ENCODE measurements at regions of chr1 and their contacts with region 1.

Region 1: DNA sequence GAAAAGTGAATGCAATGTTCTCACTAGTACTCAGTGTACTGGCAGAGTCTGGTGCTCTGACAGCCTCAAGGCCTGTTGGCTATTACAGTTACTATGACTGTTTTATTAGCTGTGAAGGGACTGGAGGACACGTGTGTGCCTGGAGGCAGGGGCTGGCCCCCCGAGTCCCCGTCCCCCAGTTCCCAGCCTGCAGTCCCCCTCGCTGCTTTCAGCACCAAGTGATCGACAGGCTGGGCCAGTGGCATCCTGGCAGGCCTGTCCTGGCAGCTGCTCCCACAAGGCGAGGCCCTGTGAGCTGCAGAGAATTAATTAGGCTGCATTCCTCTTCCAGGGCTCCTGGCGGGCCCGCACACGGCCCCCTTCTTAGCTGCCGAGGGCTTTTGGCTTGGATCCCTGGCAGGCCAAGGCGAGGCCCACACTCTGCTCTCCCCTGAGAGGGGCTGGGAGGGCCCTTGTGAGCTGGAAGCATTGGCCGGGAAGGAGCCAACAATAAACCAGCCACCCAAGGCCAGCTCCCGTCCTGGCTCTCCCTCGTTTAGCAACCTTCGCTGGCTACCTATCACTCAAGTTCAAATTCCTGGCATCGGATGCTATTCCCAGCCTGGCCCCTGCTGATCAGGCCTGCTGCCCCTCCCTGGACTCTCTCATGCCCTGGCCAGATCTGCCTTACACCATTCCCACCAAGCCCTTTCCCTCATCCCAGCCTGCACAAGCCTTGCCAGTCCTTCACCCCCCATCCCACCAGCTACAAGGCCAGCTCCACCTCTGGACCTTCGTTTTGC is 9.8 kb downstream of the EDN2 start:
- DNase-seq: no peak
- H3K4me3 Mint-ChIP-seq: no peak overlapping the region
- H3K27ac Mint-ChIP-seq: peak overlapping the region; percentile 51
- H3K4me1 Mint-ChIP-seq: peaks cover 31% of the 10 kb centered on the region
- H3K27me3 Mint-ChIP-seq: no peaks in the 10 kb centered on the region
- CTCF ChIP-seq: no peak

Region 2: GRCh38 chr1:41496080-41497055 is 21.7 kb after region 1 on chr1:
- CTCF ChIA-PET with region 1: interaction called, 13 read pairs
- POLR2A ChIA-PET with region 1: interaction called, 87 read pairs
- intact Hi-C with region 1: no loop called
- DNase-seq: peak; percentile 88
- H3K4me3 Mint-ChIP-seq: peak overlapping the region; percentile 36
- H3K27ac Mint-ChIP-seq: peak overlapping the region; percentile 91
- H3K4me1 Mint-ChIP-seq: peaks cover 58% of the 10 kb centered on the region
- H3K27me3 Mint-ChIP-seq: no peaks in the 10 kb centered on the region
- CTCF ChIP-seq: no peak

Region 3: GRCh38 chr1:41812051-41812450 is 337.4 kb after region 1 on chr1:
- CTCF ChIA-PET with region 1: no interaction called
- POLR2A ChIA-PET with region 1: no interaction called
- intact Hi-C with region 1: no loop called
- DNase-seq: peak; percentile 79
- H3K4me3 Mint-ChIP-seq: no peak overlapping the region
- H3K27ac Mint-ChIP-seq: no peak overlapping the region
- H3K4me1 Mint-ChIP-seq: peaks cover 7% of the 10 kb centered on the region
- H3K27me3 Mint-ChIP-seq: no peaks in the 10 kb centered on the region
- CTCF ChIP-seq: peak; percentile 59

Measured in MCF 10A (cell line).